ENCODE measurements at regions of chr5 and their contacts with region 1.

Region 1: GRCh38 chr5:78294248-78295034 is at the start of gene AP3B1:
- DNase-seq: peak; percentile 99
- ATAC-seq: peak; percentile 95
- H3K4me3 Mint-ChIP-seq: peak within 1 kb of the TSS; percentile 90
- H3K27ac Mint-ChIP-seq: peak within 1 kb of the TSS; percentile 98
- H3K4me1 Mint-ChIP-seq: peaks cover 32% of the 10 kb centered on the region
- H3K27me3 Mint-ChIP-seq: peaks cover 2% of the 10 kb centered on the region
- total RNA-seq, gene AP3B1: 47.0 to 48.8 TPM

Region 2: DNA sequence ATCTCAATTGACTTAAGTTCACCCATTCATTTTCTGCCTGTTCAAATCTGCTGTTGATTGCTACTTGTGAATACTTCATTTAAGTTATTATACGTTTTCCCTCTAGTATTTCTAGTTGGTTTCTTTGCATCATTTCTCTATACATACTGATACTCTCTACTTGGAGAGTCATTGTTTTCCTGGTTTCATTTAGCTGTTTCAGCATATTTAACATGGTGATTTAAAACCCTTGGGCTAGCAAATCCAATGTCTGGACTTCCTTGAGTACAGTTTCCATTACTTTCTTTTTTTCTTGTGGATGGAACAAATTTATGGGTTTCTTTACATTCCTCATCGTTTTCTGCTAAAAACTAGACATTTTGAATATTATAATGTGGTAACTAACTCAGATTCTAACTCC is 90.6 kb before region 1 on chr5:
- CTCF ChIA-PET with region 1: no interaction called
- DNase-seq: no peak
- ATAC-seq: no peak
- H3K4me3 Mint-ChIP-seq: no peak overlapping the region
- H3K27ac Mint-ChIP-seq: no peak overlapping the region
- H3K4me1 Mint-ChIP-seq: no peaks in the 10 kb centered on the region
- H3K27me3 Mint-ChIP-seq: no peaks in the 10 kb centered on the region

Region 3: DNA sequence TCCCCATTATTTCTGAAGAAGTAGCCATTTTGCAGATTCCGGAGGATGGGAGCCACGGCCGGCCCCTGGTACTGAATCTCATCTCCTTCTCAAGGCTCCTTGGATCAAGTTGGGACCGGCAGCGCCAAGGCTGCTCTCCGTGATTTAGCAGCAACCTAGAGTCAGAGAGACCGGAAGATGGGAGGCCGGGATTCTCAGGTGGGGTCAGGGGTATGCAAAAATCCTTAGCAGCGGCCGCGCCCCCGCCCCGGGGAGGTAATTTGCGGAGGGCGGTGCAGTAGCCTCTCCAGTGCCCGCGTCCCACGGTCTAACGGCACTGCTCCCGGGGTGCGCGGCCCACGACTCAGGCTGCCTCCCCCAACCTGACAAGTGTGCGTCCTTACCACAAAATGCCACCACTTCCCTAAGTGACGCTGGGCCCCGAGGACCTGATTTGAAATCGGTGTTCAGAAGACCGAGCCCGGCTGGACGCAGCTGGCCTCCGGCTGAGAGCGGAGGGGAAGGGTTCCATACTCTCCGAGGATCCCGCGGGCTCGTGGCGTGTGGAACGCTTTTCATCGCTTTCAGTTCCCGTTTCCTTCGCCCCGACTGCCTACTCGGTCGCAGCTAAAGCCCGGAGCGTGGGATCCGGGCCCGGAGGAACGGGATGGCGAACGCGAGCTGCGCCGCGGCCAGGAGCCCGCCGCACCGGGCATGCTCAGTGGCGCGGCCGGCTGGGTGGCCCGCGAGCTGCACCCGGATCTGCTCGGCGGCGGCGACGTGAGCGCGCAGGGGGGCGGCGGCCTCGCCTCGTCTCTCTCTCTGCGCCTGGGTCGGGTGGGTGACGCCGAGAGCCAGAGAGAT is 65.6 kb after region 1 on chr5 and contains the start of gene SCAMP1:
- CTCF ChIA-PET with region 1: interaction called, 23 read pairs
- DNase-seq: peak; percentile 93
- ATAC-seq: peak; percentile 94
- H3K4me3 Mint-ChIP-seq: peak within 1 kb of the TSS; percentile 85
- H3K27ac Mint-ChIP-seq: peak within 1 kb of the TSS; percentile 97
- H3K4me1 Mint-ChIP-seq: peaks cover 25% of the 10 kb centered on the region
- H3K27me3 Mint-ChIP-seq: no peaks in the 10 kb centered on the region
- total RNA-seq, gene SCAMP1: 15.1 to 17.4 TPM

Measured in activated CD8-positive, alpha-beta memory T cell treated with anti-CD3 and anti-CD28 coated beads, Interleukin-2, amount 10 ng/mL, durations not matched to agents 7 days and 5 days (primary cell).